ENCODE measurements at regions of chr6 and their contacts with region 1.

Region 1: GRCh38 chr6:157756708-157757429 is 66.2 kb upstream of the SNX9 start:
- DNase-seq: peak; percentile 94
- H3K4me3 Mint-ChIP-seq: peak overlapping the region; percentile 28
- H3K27ac Mint-ChIP-seq: peak overlapping the region; percentile 89
- H3K4me1 Mint-ChIP-seq: peaks cover 93% of the 10 kb centered on the region
- H3K27me3 Mint-ChIP-seq: no peaks in the 10 kb centered on the region

Region 2: DNA sequence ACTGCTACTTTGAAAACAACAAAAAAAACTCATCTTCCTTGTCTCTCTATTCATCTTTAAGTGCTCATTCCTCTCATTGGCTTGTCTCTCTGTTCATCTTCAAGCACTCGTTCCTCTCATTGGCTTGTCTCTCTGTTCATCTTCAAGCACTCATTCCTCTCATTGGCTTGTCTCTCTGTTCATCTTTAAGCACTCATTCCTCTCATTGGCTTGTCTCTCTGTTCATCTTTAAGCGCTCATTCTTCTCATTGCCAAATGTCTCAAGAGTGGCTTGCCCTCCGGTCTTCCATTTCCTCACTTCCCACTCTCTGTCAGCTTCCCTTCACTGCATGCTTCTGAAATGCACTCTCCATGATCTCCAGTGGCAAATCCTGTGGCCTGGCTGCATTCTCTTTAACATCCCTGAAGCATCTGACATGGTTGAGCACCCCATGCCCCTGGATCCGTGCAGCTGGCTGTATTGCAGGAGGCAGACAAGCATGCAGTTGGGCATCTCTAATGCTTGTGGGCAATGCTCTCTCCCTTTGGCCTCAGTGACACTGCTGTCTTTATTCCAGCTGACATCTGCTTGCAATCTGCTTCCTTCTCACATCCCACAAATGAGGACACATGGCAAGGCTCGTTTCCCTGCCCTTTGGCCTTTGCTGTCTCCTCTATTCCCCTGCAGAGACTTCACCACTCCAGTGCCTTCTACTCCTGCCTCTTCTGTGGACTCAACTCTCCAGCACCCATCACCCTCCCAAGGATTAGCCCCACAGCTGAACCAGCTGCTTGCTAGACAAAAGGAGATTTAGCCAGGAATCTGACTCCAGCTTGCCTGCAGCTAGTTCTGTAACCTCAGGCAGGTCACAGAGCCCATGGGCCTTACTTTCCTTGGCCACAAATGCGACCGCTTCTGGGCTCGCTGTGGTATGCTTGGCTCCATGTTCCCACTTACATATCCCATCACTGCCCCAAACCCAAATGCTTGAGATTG is 77.0 kb before region 1 on chr6:
- CTCF ChIA-PET with region 1: no interaction called
- intact Hi-C with region 1: no loop called
- DNase-seq: no peak
- H3K4me3 Mint-ChIP-seq: no peak overlapping the region
- H3K27ac Mint-ChIP-seq: no peak overlapping the region
- H3K4me1 Mint-ChIP-seq: no peaks in the 10 kb centered on the region
- H3K27me3 Mint-ChIP-seq: no peaks in the 10 kb centered on the region

Region 3: DNA sequence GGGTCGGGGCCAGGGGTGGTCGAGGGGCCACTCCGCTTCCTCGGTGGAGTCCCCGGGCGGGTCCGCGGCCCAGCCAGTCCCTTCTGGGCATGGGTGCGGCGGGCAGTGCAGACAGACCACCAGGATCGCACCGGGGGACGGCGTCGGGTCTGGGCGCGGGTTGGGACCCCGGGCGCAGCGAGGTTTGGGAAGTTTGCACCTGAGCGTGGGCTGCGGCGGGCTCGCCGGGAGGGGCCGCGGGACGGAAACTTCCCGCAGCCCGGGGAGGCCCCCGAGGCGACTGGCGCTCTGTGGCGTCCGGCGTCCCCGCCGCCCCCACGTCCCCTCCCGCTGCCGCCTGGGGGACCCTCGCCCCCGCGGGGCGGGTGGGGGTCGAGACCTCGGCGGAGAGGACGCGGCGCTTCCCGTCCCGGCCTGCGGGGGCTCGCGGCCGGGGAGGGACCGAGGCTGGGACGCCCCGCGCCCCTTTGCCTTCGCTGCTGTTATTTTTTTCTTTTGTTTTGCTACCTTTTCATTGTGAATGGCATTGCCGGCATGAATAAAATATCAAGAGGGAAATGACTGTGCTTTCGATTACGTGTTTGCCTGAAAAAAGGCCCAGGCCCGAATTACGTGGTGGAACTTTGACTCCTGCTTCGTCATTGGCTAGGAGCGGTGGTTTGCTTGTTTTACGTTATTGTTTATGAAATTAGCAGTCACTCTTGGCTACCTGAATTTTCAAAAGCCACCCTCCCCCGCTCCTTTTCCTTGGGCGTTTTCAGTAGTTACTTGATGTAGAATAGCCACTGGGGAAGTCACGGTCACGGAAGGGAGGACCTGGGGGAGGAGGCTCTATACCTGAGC is 66.9 kb after region 1 on chr6:
- CTCF ChIA-PET with region 1: interaction called, 5 read pairs
- intact Hi-C with region 1: loop called (anchors 1 kb)
- DNase-seq: peak; percentile 96
- H3K4me3 Mint-ChIP-seq: peak overlapping the region; percentile 80
- H3K27ac Mint-ChIP-seq: peak overlapping the region; percentile 96
- H3K4me1 Mint-ChIP-seq: peaks cover 42% of the 10 kb centered on the region
- H3K27me3 Mint-ChIP-seq: peaks cover 4% of the 10 kb centered on the region

Region 4: DNA sequence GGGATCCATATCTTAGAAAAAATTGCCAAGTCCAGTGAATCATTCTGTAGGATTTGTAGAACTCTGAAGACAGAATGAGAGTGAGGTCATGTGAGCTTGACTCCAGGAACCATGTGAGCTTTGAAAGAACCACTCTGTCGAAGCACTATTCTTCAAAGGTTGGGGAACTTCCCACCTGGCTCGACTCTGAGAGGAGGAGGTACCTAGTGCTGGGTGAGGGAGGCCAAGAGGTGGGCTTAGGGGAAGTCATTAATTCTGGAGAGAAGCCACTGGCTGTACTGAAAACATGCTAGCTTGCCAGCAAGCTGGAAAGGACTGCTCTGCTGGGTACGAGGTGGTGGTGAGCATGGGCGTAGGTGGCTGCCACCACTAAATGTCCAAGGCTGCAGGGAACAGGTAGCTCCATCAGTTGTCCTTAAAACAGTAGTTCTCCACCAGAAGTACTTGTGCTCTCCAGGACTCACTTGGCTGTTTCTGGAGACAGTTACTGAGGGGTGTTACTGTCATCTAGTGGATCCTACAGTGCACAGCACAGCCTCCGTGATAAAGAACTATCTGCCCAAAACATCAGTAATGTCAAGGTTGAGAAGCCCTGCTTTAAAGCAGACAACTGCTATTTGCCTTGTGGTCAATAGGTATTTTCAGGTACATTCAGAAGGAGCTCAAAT is 190.1 kb after region 1 on chr6:
- CTCF ChIA-PET with region 1: interaction called, 6 read pairs
- intact Hi-C with region 1: loop called (anchors 1 kb)
- DNase-seq: peak; percentile 57
- H3K4me3 Mint-ChIP-seq: no peak overlapping the region
- H3K27ac Mint-ChIP-seq: no peak overlapping the region
- H3K4me1 Mint-ChIP-seq: peaks cover 30% of the 10 kb centered on the region
- H3K27me3 Mint-ChIP-seq: no peaks in the 10 kb centered on the region

Region 5: GRCh38 chr6:158066136-158066781 is 309.4 kb after region 1 on chr6:
- CTCF ChIA-PET with region 1: no interaction called
- intact Hi-C with region 1: no loop called
- DNase-seq: no peak
- H3K4me3 Mint-ChIP-seq: no peak overlapping the region
- H3K27ac Mint-ChIP-seq: no peak overlapping the region
- H3K4me1 Mint-ChIP-seq: peaks cover 21% of the 10 kb centered on the region
- H3K27me3 Mint-ChIP-seq: no peaks in the 10 kb centered on the region

Measured in activated naive CD4-positive, alpha-beta T cell treated with anti-CD3 and anti-CD28 coated beads for 36 hours (primary cell).